Heart left ventricle (tissue), 16 donors: ENCODE measurements at regions of chr10 and their contacts with region 1.

Region 1: DNA sequence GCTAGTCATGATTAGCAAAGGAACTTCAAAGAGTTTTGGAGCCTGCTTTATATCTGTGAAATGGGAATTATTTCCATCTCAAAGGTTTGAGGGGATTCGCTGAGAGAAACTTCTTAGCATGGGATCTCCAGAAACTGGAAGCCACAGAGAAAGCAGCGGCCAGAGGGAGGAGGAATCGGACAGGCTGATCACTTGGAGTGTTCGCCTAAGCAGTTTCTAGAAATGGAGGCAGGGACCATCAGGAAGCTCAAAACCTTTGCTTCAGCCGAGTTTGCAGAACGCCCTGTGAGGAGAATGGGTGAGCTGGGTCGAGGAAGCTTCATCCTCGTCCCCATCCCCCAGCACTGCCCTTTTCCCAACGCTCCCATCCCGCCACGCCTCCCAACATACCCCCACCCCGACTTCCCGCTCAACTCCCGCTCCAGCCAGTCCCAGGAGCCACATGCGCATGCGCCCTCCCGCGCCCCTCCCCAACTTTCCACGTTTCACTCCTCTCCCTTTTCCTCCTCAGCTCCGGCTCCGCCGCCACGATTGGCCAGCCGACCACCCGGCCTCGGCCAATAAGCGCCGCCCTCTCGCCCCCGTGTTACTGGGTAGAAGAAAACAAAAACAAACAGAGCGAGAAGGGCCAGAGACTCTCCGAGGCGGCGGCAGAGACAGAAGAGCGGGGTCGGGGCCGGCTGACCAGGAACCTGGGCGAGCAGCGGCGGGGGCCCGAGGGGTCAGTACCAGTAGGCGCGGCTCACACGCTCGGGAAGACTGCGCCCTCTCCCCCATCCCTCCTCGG is at the start of gene PDCD4:
- DNase-seq: peak; percentile 100
- ATAC-seq: peak; percentile 96 to 97 (median 97)
- H3K4me3 ChIP-seq: peak within 1 kb of the TSS; percentile 68 to 100 (median 93)
- H3K27ac ChIP-seq: peak within 1 kb of the TSS; percentile 93 to 99 (median 96)
- H3K4me1 ChIP-seq: peaks cover 0 to 83% (median 18%) of the 10 kb centered on the region in 12 donors
- H3K27me3 ChIP-seq: no peaks in the 10 kb centered on the region
- CTCF ChIP-seq: no peak
- POLR2A ChIP-seq: peak; percentile 52 to 95
- total RNA-seq, gene PDCD4: 21.7 to 73.2 (median 44.1) TPM

Region 2: GRCh38 chr10:110746254-110746826 is 125.2 kb before region 1 on chr10:
- intact Hi-C with region 1: loop called in 3 of 10 experiments (anchors 5 kb)
- DNase-seq: peak in 3 of 5 donors; percentile 55 to 59 (median 55)
- ATAC-seq: peak; percentile 32 to 60 (median 58)
- H3K4me3 ChIP-seq: no peak overlapping the region
- H3K27ac ChIP-seq: peak overlapping the region in 9 of 12 donors; percentile 15 to 86 (median 53)
- H3K4me1 ChIP-seq: peaks cover 2 to 72% (median 31%) of the 10 kb centered on the region in 12 donors
- H3K27me3 ChIP-seq: no peaks in the 10 kb centered on the region
- CTCF ChIP-seq: peak; percentile 66 to 88 (median 82)
- POLR2A ChIP-seq: no peak

Region 3: GRCh38 chr10:110758898-110759297 is 112.6 kb before region 1 on chr10:
- intact Hi-C with region 1: loop called in 1 of 10 experiments (anchors 5 kb)
- DNase-seq: peak in 3 of 5 donors; percentile 50 to 68 (median 54)
- ATAC-seq: peak in 3 of 4 donors; percentile 42 to 55 (median 44)
- H3K4me3 ChIP-seq: no peak overlapping the region
- H3K27ac ChIP-seq: peak overlapping the region; percentile 34 to 96 (median 82)
- H3K4me1 ChIP-seq: peaks cover 11 to 94% (median 55%) of the 10 kb centered on the region in 12 donors
- H3K27me3 ChIP-seq: no peaks in the 10 kb centered on the region
- CTCF ChIP-seq: no peak
- POLR2A ChIP-seq: no peak

Region 4: DNA sequence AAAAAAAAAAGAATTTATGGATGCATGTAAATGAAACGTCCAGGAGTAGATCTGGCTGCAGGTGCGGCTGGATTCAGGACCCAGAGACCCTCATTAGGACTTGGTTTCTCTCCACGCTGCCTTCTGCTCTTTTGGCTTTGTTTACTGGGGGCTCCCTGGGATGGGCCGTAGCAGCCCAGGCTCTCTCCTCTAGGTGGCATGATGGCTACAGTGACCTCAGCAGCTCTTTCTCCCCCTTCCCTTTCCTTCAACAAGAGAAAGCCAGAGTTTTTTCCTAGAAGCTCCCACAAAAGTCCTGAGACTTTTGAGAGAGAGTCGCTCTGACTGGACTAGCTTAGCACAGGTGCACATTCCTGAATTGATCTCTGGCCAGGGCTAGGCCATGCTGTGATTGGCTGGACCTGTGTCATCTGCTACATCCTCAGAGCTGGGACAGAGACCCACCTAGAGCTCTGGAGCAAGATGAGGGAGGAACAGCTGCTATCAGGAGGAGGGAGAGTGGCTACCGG is 67.6 kb before region 1 on chr10:
- intact Hi-C with region 1: loop called in 6 of 10 experiments (anchors 5 to 10 kb)
- DNase-seq: peak in 2 of 5 donors; percentile 53 to 55
- ATAC-seq: peak; percentile 44 to 66 (median 58)
- H3K4me3 ChIP-seq: no peak overlapping the region
- H3K27ac ChIP-seq: peak overlapping the region in 8 of 12 donors; percentile 14 to 68 (median 31)
- H3K4me1 ChIP-seq: peaks cover 0 to 42% (median 26%) of the 10 kb centered on the region in 12 donors
- H3K27me3 ChIP-seq: no peaks in the 10 kb centered on the region
- CTCF ChIP-seq: peak; percentile 36 to 74 (median 55)
- POLR2A ChIP-seq: no peak

Region 5: GRCh38 chr10:110820321-110820814 is 51.1 kb before region 1 on chr10:
- intact Hi-C with region 1: loop called in 5 of 10 experiments (anchors 5 kb)
- DNase-seq: peak in 4 of 5 donors; percentile 77 to 80 (median 79)
- ATAC-seq: peak; percentile 53 to 78 (median 64)
- H3K4me3 ChIP-seq: no peak overlapping the region
- H3K27ac ChIP-seq: peak overlapping the region; percentile 61 to 91 (median 80)
- H3K4me1 ChIP-seq: peaks cover 3 to 94% (median 52%) of the 10 kb centered on the region in 12 donors
- H3K27me3 ChIP-seq: no peaks in the 10 kb centered on the region
- CTCF ChIP-seq: no peak
- POLR2A ChIP-seq: no peak

Region 6: DNA sequence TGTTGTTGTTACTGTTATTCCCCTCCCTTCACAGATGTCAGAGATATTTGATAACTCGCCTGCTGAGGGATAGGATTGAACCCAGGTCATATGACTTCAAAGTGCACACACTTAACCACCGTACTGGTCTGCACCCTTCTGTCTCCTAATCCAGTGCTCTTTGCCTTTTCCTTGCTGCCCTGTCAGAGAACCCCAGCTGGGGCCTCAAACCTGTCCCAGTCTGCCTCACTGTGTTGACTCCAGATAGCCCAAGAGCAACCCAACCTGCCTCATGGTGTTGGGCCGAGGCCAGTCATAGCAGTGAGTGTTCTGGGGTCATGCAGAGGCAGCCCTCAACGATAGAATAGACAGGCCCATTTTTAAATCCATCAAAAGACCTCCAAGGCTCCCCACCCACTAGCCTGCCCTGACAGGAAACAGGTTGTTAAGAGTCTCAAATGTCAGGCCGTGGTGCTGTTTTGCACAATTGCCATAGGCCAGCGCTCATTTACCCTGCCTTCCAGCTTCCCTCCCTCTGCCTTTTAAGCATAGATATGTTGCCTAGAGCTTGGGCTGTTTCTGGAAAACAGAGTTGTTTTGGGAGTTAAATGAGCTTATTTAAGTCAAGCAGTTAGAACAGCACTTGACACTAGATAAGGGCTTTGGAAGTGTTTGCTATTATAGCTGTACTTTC is 36.7 kb before region 1 on chr10:
- intact Hi-C with region 1: loop called in 3 of 10 experiments (anchors 5 kb)
- DNase-seq: peak in 2 of 5 donors; percentile 58 to 59
- ATAC-seq: peak; percentile 71 to 78 (median 74)
- H3K4me3 ChIP-seq: no peak overlapping the region
- H3K27ac ChIP-seq: peak overlapping the region; percentile 27 to 90 (median 71)
- H3K4me1 ChIP-seq: peaks cover 0 to 78% (median 41%) of the 10 kb centered on the region in 12 donors
- H3K27me3 ChIP-seq: no peaks in the 10 kb centered on the region
- CTCF ChIP-seq: no peak
- POLR2A ChIP-seq: no peak

Region 7: DNA sequence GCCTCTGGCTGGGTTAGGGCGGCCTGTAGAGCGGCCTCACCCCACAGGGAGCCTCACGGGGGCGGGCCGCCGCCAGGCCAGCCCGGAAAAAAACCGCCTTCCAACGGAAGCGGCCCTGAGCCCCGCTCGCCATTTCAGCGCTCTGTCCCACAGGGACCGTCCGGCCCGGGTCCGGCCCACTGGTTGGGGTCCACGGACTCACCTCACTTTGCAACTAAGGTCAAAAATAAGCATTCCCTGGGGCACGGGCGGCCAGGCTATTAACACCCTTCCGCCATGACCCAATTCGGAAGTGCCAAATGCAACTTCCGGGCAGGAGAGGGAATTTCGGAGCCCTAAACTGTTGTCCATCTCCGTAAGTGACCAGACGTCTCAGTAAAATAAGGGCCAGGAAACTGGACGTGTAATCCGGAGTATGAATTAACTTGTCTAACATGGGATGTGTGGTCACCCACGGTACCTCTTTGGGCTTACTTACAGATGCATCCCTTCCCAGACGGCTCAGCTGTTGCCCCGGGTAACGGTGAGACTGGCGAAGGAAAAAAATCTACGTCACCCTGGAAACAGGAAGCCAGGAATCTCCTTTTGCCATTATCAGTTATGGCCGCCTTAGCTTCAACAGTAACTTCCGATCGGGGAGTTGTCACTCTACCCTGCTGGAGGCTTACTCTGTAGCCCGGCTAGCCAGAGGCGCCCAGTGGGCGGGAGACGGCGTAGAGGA is 47.3 kb after region 1 on chr10 and contains the start of gene BBIP1:
- intact Hi-C with region 1: loop called in 2 of 10 experiments (anchors 1 to 2 kb)
- DNase-seq: no peak
- ATAC-seq: peak; percentile 96 to 97 (median 97)
- H3K4me3 ChIP-seq: peak within 1 kb of the TSS; percentile 62 to 90 (median 76)
- H3K27ac ChIP-seq: peak within 1 kb of the TSS; percentile 94 to 100 (median 99)
- H3K4me1 ChIP-seq: peaks cover 2 to 47% (median 39%) of the 10 kb centered on the region in 12 donors
- H3K27me3 ChIP-seq: no peaks in the 10 kb centered on the region
- CTCF ChIP-seq: peak in 4 of 12 donors; percentile 8 to 36 (median 16)
- POLR2A ChIP-seq: peak in 1 of 2 donors; percentile 66
- total RNA-seq, gene BBIP1: 19.3 to 32.4 (median 25.2) TPM